PC-9 (cell line): ENCODE measurements at regions of chr10 and their contacts with region 1.

Region 1: DNA sequence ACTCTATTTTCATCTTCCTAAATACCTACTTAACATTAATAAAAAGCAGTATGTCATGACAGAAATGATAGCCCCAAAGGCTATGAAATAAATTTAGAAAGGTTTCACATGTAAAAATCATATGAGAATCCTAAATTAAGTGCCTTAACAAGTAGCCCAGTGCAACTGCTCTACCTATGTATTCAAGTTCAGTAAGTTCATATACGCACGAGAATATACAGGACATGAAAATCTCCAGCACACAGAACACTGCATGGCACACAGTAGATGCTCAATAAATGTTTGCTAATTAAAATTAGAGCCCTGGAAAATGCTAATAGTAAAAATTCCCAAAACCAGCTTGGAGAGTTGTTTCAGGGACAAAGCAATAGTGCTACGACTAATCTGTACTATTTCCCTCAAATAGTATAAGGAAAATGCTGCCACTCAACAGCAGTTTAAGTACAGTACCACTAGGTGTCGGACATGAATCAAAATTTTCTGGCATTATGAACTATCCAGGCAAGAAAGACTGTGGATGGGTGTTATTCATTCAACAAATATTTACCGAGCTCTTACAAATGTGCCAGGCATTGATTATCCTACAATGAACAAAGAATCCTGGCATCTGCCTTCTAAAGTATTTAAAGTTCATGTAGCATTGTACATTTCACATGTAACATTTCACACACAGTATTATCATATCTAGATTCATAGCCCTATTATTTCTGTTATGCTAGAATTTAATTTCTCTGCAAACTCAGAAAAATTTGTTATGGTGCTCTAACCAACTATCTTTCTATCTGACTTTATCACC is 80.9 kb downstream of the ARHGAP21 start:
- DNase-seq: peak; percentile 20 to 80
- H3K4me3 ChIP-seq: no peak overlapping the region
- H3K27ac ChIP-seq: peak overlapping the region; percentile 29; the same call in 1 of the 2 replicates
- H3K4me1 ChIP-seq: peaks cover 36% of the 10 kb centered on the region
- H3K27me3 ChIP-seq: no peaks in the 10 kb centered on the region
- CTCF ChIP-seq: peak; percentile 80

Region 2: GRCh38 chr10:24822590-24822989 is 179.8 kb after region 1 on chr10:
- CTCF ChIA-PET with region 1: no interaction called
- POLR2A ChIA-PET with region 1: no interaction called
- intact Hi-C with region 1: loop called (anchors 2 kb)
- DNase-seq: no peak
- H3K4me3 ChIP-seq: no peak overlapping the region
- H3K27ac ChIP-seq: no peak overlapping the region
- H3K4me1 ChIP-seq: peaks cover 40% of the 10 kb centered on the region
- H3K27me3 ChIP-seq: no peaks in the 10 kb centered on the region
- CTCF ChIP-seq: no peak

Region 3: DNA sequence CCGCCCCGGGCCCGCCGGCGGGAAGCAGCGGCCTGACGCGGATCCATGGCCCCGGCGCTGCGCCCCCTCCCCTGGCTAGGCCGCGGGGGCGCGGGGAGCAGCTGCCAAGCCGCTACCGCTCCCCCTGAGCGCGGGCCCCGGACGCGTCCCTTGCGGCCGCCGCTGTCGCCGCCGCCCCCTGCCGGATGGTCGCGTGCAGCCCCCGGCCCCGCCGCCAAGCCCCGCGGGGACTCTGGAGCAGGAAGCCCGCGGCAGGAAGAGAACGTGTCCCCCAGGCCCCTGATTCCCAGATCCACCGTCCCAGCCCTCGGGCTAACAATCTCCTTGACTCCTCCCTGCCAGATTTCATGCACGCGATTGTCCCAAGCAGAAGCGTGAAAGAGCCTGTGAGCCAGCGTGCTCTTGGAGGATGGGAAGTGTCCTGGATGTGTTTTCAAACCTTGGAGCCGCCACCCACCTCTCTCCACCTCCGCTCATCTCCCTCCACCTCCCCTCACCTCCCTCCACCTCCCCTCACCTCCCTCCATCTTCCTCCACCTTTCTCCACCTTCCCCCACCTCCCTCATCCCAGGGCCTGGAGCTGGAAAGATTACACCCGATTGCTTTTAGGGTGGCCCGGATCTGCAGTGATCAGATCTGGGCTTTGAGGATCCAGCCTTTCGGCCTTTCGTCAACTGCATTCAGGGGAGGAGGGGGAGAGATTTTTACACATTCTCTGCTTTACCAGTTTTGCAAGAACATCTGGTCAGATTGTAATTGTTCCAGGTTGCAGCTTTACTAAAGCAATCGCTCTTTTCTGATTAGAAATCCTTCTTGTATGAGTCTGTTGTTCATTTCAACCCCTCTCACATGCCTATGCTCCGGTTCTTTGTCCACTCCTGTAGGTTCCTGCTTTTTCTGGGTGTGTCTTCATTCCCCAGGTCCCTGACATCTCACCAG is 310.2 kb after region 1 on chr10:
- CTCF ChIA-PET with region 1: no interaction called
- POLR2A ChIA-PET with region 1: no interaction called
- intact Hi-C with region 1: loop called (anchors 2 kb)
- DNase-seq: peak; percentile 39
- H3K4me3 ChIP-seq: peak overlapping the region; percentile 52
- H3K27ac ChIP-seq: 0 out of 2 replicates have a peak overlapping the region, but pooled peaks have one; percentile 20
- H3K4me1 ChIP-seq: peaks cover 26% of the 10 kb centered on the region
- H3K27me3 ChIP-seq: no peaks in the 10 kb centered on the region
- CTCF ChIP-seq: no peak; the same call in 1 of the 2 replicates

Region 4: GRCh38 chr10:24989867-24990266 is 347.0 kb after region 1 on chr10:
- CTCF ChIA-PET with region 1: no interaction called
- POLR2A ChIA-PET with region 1: no interaction called
- intact Hi-C with region 1: loop called (anchors 1 kb)
- DNase-seq: no peak
- H3K4me3 ChIP-seq: no peak overlapping the region
- H3K27ac ChIP-seq: no peak overlapping the region
- H3K4me1 ChIP-seq: no peaks in the 10 kb centered on the region
- H3K27me3 ChIP-seq: no peaks in the 10 kb centered on the region
- CTCF ChIP-seq: peak; percentile 43; the same call in 1 of the 2 replicates

Region 5: GRCh38 chr10:25059764-25060389 is 417.1 kb after region 1 on chr10:
- CTCF ChIA-PET with region 1: no interaction called
- POLR2A ChIA-PET with region 1: no interaction called
- intact Hi-C with region 1: loop called (anchors 5 kb)
- DNase-seq: peak; percentile 84 to 88
- H3K4me3 ChIP-seq: no peak overlapping the region; the same call in 1 of the 2 replicates
- H3K27ac ChIP-seq: peak overlapping the region; percentile 89
- H3K4me1 ChIP-seq: peaks cover 42% of the 10 kb centered on the region
- H3K27me3 ChIP-seq: no peaks in the 10 kb centered on the region
- CTCF ChIP-seq: no peak

Region 6: DNA sequence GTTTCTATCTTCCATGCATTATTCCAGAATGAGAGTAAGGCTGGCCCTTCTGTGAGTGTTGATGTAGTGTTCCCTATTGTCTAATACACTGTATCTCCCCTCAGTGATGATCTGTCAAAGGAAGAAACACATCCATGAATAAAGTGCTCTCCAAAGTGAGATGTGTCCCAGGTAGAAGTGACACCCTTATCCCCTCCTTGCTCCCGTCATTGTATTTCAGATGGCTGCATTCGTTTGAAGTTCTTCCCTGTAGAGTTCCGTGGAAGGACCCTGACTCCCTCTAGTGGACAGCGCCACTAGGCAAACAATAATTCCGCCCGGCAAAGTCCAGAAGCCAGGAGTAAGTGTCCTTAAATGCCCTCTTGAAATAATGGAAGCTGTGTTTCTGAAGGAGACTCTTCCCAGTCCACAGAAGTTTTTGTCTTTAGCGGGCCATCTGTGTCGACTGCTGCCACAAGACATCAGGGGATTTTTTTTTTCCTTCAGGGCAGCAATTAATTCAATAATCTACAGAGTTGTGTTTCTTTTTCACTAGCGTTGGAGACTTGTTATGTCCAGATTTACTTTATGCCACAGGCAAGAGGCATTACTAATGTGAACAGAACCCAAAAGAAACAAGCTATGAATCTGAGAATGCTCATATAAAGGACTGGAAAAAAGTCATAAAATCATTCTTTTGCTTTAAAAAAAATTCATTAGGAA is 438.2 kb after region 1 on chr10:
- CTCF ChIA-PET with region 1: no interaction called
- POLR2A ChIA-PET with region 1: no interaction called
- intact Hi-C with region 1: loop called (anchors 1 kb)
- DNase-seq: peak; percentile 59 to 79
- H3K4me3 ChIP-seq: no peak overlapping the region
- H3K27ac ChIP-seq: no peak overlapping the region
- H3K4me1 ChIP-seq: no peaks in the 10 kb centered on the region
- H3K27me3 ChIP-seq: no peaks in the 10 kb centered on the region
- CTCF ChIP-seq: peak; percentile 86

Region 7: GRCh38 chr10:25226775-25227682 is 584.2 kb after region 1 on chr10:
- CTCF ChIA-PET with region 1: no interaction called
- POLR2A ChIA-PET with region 1: no interaction called
- intact Hi-C with region 1: loop called (anchors 5 kb)
- DNase-seq: peak in 1 of 2 experiments; percentile 23
- H3K4me3 ChIP-seq: no peak overlapping the region
- H3K27ac ChIP-seq: no peak overlapping the region
- H3K4me1 ChIP-seq: no peaks in the 10 kb centered on the region
- H3K27me3 ChIP-seq: no peaks in the 10 kb centered on the region
- CTCF ChIP-seq: peak; percentile 68